ENCODE measurements at regions of chr17 and their contacts with region 1.

Region 1: GRCh38 chr17:44968226-44969143 is at the start of gene C1QL1:
- DNase-seq: peak; percentile 95
- ATAC-seq: peak; percentile 98
- total RNA-seq, gene C1QL1: 11.3 TPM

Region 2: GRCh38 chr17:44947461-44948314 is 20.8 kb before region 1 on chr17 and contains the start of gene KIF18B:
- intact Hi-C with region 1: loop called (anchors 2 kb)
- DNase-seq: peak; percentile 95
- ATAC-seq: peak; percentile 98
- total RNA-seq, gene KIF18B: 2.5 TPM

Measured in Right ventricle myocardium inferior (tissue), 1 donor.